Activated T-helper 2 cell treated with anti-CD3 and anti-CD28 coated beads, Interferon-gamma antibody, Interleukin-2, Interleukin-4, amounts not matched to agents 10 μg/mL and 5 μg/mL and 100 μg/mL, durations not matched to agents 14 hours and 24 hours and 36 hours (primary cell): ENCODE measurements at regions of chr7 and their contacts with region 1.

Region 1: GRCh38 chr7:13262929-13263530 is 575.6 kb downstream of the ARL4A start:
- DNase-seq: no peak
- H3K4me3 Mint-ChIP-seq: no peak overlapping the region
- H3K27ac Mint-ChIP-seq: no peak overlapping the region
- H3K4me1 Mint-ChIP-seq: no peaks in the 10 kb centered on the region
- H3K27me3 Mint-ChIP-seq: no peaks in the 10 kb centered on the region

Region 2: GRCh38 chr7:12524794-12525386 is 738.1 kb before region 1 on chr7:
- intact Hi-C with region 1: loop called (anchors 5 kb)
- DNase-seq: no peak
- H3K4me3 Mint-ChIP-seq: no peak overlapping the region
- H3K27ac Mint-ChIP-seq: no peak overlapping the region
- H3K4me1 Mint-ChIP-seq: no peaks in the 10 kb centered on the region
- H3K27me3 Mint-ChIP-seq: peaks cover 7% of the 10 kb centered on the region

Region 3: GRCh38 chr7:12638851-12639467 is 624.1 kb before region 1 on chr7:
- intact Hi-C with region 1: loop called (anchors 1 kb)
- DNase-seq: no peak
- H3K4me3 Mint-ChIP-seq: no peak overlapping the region
- H3K27ac Mint-ChIP-seq: no peak overlapping the region
- H3K4me1 Mint-ChIP-seq: peaks cover 19% of the 10 kb centered on the region
- H3K27me3 Mint-ChIP-seq: peaks cover 4% of the 10 kb centered on the region

Region 4: DNA sequence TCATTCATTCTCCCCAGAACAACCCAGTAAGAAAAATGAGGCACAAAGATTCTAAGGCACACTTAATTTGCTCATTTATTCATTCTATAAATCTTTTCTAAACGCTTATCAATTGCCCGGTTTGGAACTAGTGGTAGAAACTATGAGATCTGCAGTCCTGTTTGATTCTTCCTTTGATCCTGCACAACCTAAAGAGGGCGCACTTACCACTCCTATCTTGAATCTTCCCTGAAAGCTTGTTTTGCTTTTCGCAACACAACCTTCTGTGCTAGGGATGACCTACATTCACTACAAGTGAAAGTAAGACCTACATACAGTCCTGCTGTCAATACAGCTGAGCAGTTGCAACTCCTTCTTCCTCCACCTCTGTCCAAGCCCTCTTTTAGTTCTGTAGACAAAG is 588.2 kb before region 1 on chr7:
- intact Hi-C with region 1: loop called (anchors 1 kb)
- DNase-seq: peak; percentile 34
- H3K4me3 Mint-ChIP-seq: no peak overlapping the region
- H3K27ac Mint-ChIP-seq: no peak overlapping the region
- H3K4me1 Mint-ChIP-seq: peaks cover 7% of the 10 kb centered on the region
- H3K27me3 Mint-ChIP-seq: peaks cover 3% of the 10 kb centered on the region